ENCODE measurements at regions of chr10 and their contacts with region 1.

Region 1: GRCh38 chr10:79292891-79293746 is 54.1 kb upstream of the PPIF start:
- DNase-seq: peak in 5 of 9 experiments; percentile 26 to 60 (median 47)
- ATAC-seq: peak; percentile 68
- H3K4me3 ChIP-seq: no peak overlapping the region
- H3K4me3 Mint-ChIP-seq: no peak overlapping the region
- H3K27ac ChIP-seq: no peak overlapping the region
- H3K27ac Mint-ChIP-seq: no peak overlapping the region
- H3K4me1 ChIP-seq: no peaks in the 10 kb centered on the region
- H3K4me1 Mint-ChIP-seq: no peaks in the 10 kb centered on the region
- H3K27me3 ChIP-seq: no peaks in the 10 kb centered on the region
- H3K27me3 Mint-ChIP-seq: no peaks in the 10 kb centered on the region
- CTCF ChIP-seq: peak; percentile 33

Region 2: GRCh38 chr10:79339266-79339665 is 46.1 kb after region 1 on chr10:
- CTCF ChIA-PET with region 1: no interaction called
- POLR2A ChIA-PET with region 1: no interaction called
- intact Hi-C with region 1: no loop called
- DNase-seq: no peak
- ATAC-seq: no peak
- H3K4me3 ChIP-seq: no peak overlapping the region
- H3K4me3 Mint-ChIP-seq: no peak overlapping the region
- H3K27ac ChIP-seq: no peak overlapping the region
- H3K27ac Mint-ChIP-seq: no peak overlapping the region
- H3K4me1 ChIP-seq: no peaks in the 10 kb centered on the region
- H3K4me1 Mint-ChIP-seq: no peaks in the 10 kb centered on the region
- H3K27me3 ChIP-seq: no peaks in the 10 kb centered on the region
- H3K27me3 Mint-ChIP-seq: no peaks in the 10 kb centered on the region
- CTCF ChIP-seq: no peak

Region 3: DNA sequence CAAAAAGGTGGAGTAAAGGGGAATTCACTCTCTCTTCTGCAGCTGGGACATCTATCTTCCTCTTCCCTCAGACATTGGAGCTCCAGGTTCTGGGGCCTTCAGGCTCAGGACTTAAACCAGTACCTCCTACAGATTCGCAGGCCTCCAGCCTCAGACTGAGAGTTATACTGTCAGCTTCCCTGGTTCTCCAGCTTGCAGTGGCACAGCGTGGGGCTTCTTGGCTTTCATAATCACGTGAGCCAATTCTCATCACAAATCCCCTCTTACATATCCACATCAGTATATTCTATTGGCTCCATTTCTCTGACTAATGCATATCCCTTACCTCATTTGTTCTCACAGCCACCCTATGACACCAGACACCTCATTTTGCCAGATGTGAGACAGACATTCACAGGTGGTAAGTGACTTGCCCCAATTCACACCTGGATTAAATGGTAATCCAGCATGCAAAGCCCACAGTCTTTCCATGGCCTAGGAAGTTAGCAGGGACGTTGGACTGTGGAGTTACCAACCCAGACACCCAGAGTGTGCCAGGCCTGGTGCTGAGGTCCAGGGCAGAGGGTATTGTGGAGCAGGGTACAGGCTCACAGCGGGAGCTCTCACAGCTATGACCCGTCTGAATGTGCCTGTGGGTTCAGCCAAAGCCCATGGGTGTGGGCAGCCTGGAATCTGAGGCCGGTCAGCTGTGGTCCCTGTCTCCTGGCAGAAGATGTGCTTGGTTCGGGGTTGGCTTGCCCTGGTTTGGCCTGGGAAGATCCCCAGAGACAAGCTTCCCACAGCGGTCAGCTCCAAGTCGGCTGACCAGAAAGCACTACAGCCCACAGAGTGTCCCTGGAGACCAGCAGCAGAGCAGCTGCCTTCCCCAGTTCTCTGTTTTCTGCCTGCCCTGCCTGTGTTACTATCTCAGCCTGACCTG is 170.7 kb after region 1 on chr10:
- CTCF ChIA-PET with region 1: interaction called, 4 read pairs
- POLR2A ChIA-PET with region 1: no interaction called
- intact Hi-C with region 1: loop called (anchors 1 to 2 kb)
- DNase-seq: peak in 1 of 9 experiments; percentile 44
- ATAC-seq: no peak
- H3K4me3 ChIP-seq: no peak overlapping the region
- H3K4me3 Mint-ChIP-seq: no peak overlapping the region
- H3K27ac ChIP-seq: no peak overlapping the region
- H3K27ac Mint-ChIP-seq: no peak overlapping the region
- H3K4me1 ChIP-seq: no peaks in the 10 kb centered on the region
- H3K4me1 Mint-ChIP-seq: no peaks in the 10 kb centered on the region
- H3K27me3 ChIP-seq: no peaks in the 10 kb centered on the region
- H3K27me3 Mint-ChIP-seq: peaks cover 2% of the 10 kb centered on the region
- CTCF ChIP-seq: no peak

Region 4: DNA sequence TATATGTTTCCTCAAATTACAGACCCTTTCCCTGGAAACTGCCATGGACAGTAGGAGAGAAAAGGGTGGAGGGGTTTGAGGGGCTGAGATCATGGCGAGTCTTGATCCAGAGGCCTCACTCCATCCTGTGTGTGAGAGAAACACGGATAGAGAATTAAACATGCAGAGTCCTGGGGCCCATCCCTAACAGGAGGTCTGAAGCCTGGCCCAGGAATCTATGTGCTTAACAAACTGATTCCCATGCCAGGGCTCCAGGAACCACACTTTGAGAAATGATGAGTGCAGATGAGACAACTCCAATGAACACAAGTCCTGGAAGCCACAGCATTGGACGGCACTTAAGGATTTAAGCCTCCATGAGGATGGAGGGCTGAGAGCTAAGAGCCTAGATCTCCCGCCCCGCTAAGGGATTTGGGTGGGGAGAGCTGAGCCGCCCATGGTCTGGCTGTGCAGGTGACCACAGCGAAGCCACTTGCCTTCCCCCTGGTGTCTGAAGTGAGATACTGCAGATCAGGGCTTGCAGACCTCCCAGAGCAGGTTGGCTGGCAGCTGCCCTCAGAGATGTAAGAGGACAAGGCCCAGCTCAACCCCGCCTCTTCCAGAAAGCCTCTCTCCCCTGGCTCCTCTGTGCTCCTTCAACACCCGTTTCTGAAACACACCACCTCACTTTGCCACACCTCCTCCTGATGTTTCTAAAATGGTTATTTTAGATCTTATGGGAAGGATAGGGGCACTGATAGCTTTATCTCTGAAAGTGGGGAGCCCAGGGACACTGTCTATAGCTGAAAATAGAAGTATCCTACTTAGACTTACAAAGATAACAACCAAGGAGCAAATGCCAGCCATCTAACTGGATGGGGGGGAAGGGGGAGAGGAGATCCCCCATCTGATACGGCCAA is 194.4 kb after region 1 on chr10:
- CTCF ChIA-PET with region 1: no interaction called
- POLR2A ChIA-PET with region 1: no interaction called
- intact Hi-C with region 1: loop called in 1 of 2 experiments (anchors 5 kb)
- DNase-seq: peak in 4 of 9 experiments; percentile 22 to 55 (median 34)
- ATAC-seq: no peak
- H3K4me3 ChIP-seq: no peak overlapping the region
- H3K4me3 Mint-ChIP-seq: no peak overlapping the region
- H3K27ac ChIP-seq: no peak overlapping the region
- H3K27ac Mint-ChIP-seq: no peak overlapping the region
- H3K4me1 ChIP-seq: no peaks in the 10 kb centered on the region
- H3K4me1 Mint-ChIP-seq: no peaks in the 10 kb centered on the region
- H3K27me3 ChIP-seq: no peaks in the 10 kb centered on the region
- H3K27me3 Mint-ChIP-seq: no peaks in the 10 kb centered on the region
- CTCF ChIP-seq: peak; percentile 53